ENCODE measurements at regions of chr2 and their contacts with region 1.

Region 1: DNA sequence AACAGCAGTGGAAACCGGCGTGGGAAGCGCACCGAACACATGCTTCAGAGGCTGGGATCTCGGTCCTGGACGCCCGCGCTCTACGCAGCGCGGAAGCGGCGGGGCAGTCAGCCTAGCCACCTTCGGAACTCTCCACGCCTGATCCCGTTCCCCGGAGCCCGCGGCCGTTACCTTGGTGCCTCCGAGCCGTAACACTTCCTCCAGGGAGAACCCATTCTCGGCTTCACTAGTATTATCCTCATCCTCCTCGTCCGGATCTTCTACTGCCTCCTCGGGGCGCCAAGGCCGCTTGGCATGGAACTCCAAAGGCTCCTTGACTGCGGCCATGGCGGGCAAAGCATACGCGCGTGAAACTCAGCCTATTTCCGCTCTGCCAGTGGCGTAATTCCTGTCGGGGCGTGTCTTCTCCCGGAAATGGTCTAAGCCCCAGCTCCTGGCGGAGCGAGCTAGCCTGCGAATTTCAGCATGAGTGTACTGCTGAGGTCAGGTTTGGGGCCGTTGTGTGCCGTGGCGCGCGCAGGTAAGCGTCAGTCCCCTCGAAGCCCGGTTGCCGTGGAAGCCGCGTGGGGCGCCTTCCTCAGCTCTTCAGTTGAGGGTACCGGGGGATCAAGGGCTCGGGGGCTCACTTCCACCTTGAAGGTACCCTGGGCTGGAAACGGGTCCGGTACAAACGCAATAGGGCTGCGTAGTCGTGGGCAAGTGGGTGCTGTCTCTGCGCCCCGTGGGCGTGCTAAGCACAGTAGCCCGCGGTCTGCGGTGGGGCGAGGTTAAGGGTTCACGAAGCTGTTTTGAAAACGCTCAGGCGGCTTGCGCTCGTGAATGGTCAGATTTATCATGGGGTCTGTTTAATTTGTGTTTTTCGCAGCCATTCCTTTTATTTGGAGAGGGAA is at the starts of genes CEBPZ and NDUFAF7:
- DNase-seq: peak; percentile 68 to 94 (median 86)
- ATAC-seq: peak; percentile 88 to 92
- H3K4me3 Mint-ChIP-seq: no peak within 1 kb of the TSS
- H3K27ac Mint-ChIP-seq: no peak within 1 kb of the TSS
- H3K4me1 Mint-ChIP-seq: peaks cover 12 to 48% (median 40%) of the 10 kb centered on the region in 4 donors
- H3K27me3 Mint-ChIP-seq: no peaks in the 10 kb centered on the region
- polyA plus RNA-seq, gene CEBPZ: 24.3 to 37.8 (median 25.7) TPM
- polyA plus RNA-seq, gene NDUFAF7: 5.7 to 9.5 (median 8.4) TPM

Region 2: GRCh38 chr2:37196320-37197195 is 34.9 kb before region 1 on chr2 and contains the start of gene CEBPZOS:
- POLR2A ChIA-PET with region 1: interaction called, 17 read pairs
- DNase-seq: peak; percentile 87 to 96 (median 90)
- ATAC-seq: peak; percentile 90 to 95
- H3K4me3 Mint-ChIP-seq: peak within 1 kb of the TSS; percentile 92 to 100 (median 98)
- H3K27ac Mint-ChIP-seq: peak within 1 kb of the TSS; percentile 96 to 100 (median 98)
- H3K4me1 Mint-ChIP-seq: peaks cover 13 to 35% (median 26%) of the 10 kb centered on the region in 4 donors
- H3K27me3 Mint-ChIP-seq: no peaks in the 10 kb centered on the region
- polyA plus RNA-seq, gene CEBPZOS: 43.0 to 44.5 (median 43.8) TPM

Region 3: DNA sequence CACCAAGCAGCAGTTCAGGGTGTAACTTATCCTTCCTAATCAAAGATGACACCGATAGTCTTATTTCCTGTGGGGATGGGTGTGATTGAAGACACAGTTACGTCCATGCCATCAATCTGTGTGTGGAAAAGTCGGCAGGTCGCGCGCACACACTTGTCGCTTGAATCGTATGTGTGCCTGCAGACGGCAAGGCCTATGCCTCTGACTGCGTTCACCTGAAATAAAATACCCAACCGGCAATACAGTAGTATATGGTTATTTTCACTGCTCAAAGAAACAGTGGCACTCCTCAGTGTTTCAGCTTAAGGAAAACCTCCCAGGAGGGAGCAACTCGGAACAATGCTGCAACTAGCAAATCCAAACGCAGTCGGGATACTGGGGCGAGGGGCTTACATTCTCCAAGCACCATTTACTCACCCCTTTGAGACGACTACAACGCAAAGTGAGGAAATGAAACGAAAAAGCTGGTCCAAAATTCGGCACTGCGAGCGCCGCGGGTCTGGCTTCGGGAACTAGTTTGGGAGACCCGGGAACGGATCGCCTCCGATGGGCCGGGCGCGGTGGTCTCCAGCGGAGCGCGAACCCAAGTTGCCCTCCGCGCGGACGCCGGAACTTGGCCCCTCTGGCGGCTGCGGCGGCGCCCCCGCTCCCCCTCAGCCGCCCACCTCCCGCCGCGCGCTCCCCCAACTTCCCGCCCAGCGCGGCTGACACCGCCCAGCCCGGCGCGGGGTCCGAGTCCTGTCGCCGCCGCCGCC is 92.5 kb after region 1 on chr2:
- POLR2A ChIA-PET with region 1: interaction called, 11 read pairs
- DNase-seq: peak; percentile 25 to 75 (median 50)
- ATAC-seq: peak; percentile 39 to 58
- H3K4me3 Mint-ChIP-seq: peak overlapping the region; percentile 88 to 100 (median 99)
- H3K27ac Mint-ChIP-seq: peak overlapping the region; percentile 87 to 99 (median 97)
- H3K4me1 Mint-ChIP-seq: peaks cover 15 to 56% (median 34%) of the 10 kb centered on the region in 4 donors
- H3K27me3 Mint-ChIP-seq: peaks cover 0 to 12% (median 5%) of the 10 kb centered on the region in 5 donors